Activated CD4-positive, alpha-beta T cell treated with anti-CD3 and anti-CD28 coated beads, Interleukin-2, amount 10 ng/mL, durations not matched to agents 24 days and 14 days (primary cell): ENCODE measurements at regions of chr7 and their contacts with region 1.

Region 1: DNA sequence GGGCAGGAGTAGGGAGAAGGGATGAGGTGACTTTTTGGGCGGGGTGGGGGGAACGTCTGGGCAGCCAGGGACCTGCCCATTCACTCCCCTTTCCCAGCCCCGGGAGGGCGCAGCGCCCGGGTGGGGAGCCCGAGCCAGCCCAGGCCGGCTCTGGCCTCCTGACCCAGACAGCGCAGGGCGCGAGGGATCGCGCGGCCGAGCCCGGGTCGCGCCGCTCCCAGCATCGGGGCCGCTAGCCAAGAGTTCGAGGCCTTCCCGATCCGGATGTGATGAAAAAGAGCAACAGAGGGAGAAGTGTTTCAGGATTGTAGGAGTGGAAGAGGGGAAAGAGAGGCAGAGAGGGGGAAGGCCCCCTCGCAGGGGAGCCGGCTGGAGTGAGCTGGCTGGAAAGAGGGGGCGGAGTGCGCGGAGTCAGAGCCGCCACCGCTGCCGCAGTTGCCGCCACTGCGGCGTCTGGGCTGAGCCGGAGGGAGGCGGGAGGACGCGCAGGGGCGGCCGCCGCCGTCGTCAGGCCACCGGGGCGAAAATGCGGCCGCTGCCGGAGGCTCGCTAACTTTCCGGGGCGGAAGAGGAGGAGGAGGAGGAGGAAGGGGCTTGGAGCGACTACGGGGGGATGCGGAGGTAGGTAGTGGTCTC is at the start of gene MDFIC:
- DNase-seq: peak; percentile 89
- H3K4me3 Mint-ChIP-seq: peak within 1 kb of the TSS; percentile 96
- H3K27ac Mint-ChIP-seq: peak within 1 kb of the TSS; percentile 98
- H3K4me1 Mint-ChIP-seq: peaks cover 56% of the 10 kb centered on the region
- H3K27me3 Mint-ChIP-seq: no peaks in the 10 kb centered on the region
- total RNA-seq, gene MDFIC: 172 and 175 TPM in 2 replicates

Region 2: DNA sequence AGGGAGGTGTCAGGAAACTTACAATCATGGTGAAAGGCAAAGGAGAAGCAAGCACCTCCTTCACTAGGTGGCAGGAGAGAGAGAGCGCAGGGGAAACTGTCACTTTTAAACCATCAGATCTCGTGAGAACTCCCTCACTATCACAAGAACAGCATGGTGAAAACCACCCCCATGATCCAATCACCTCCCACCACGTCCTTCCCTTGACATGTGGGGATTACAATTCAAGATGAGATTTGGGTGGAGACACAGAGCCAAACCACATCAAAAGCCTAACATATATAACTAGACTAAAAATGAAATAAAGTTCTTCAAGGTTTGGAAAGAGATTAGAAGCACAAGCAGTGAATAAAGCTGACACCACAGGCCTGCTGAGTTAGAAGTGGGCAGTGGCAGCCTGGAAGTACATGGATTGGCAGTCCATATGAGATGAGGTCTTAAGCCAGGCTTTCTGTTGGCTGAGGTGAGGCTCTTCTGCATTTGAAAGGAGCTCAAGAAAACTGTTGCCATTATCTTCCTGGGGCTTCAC is 96.6 kb before region 1 on chr7:
- intact Hi-C with region 1: loop called (anchors 1 kb)
- DNase-seq: peak; percentile 72
- H3K4me3 Mint-ChIP-seq: peak overlapping the region; percentile 54
- H3K27ac Mint-ChIP-seq: peak overlapping the region; percentile 97
- H3K4me1 Mint-ChIP-seq: peaks cover 24% of the 10 kb centered on the region
- H3K27me3 Mint-ChIP-seq: no peaks in the 10 kb centered on the region

Region 3: DNA sequence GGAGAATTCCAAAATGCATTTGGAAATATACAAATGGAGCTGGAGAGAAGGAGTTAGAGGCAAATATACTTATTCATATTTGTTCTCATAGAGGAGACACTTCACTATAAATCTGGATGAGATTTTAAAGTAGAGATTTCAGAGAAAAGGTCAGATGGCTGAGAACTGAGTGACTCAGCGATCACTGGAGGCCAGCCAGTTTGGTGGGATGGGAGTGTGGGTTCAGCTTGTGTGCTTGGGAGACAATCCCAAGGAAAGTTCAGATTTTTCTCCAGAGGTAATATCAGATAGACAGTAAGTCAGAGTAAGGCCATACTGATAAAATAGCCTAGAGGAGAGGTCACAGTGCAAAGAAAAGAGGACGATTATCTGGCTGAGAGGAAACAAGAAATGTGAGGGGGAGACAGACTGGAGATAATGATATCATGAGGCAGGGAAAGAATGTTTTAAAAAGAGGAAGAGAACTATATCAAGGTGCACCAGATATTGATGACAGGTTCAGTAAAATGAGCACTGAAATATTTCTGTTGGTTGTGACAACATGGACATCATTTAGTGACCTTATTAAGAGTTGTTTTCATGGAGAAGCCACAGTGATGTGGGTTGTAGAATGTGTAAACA is 66.7 kb after region 1 on chr7:
- intact Hi-C with region 1: no loop called
- DNase-seq: no peak
- H3K4me3 Mint-ChIP-seq: no peak overlapping the region
- H3K27ac Mint-ChIP-seq: no peak overlapping the region
- H3K4me1 Mint-ChIP-seq: peaks cover 27% of the 10 kb centered on the region
- H3K27me3 Mint-ChIP-seq: no peaks in the 10 kb centered on the region

Region 4: GRCh38 chr7:115008465-115009114 is 86.5 kb after region 1 on chr7:
- intact Hi-C with region 1: loop called (anchors 2 kb)
- DNase-seq: peak; percentile 72
- H3K4me3 Mint-ChIP-seq: peak overlapping the region; percentile 73
- H3K27ac Mint-ChIP-seq: peak overlapping the region; percentile 86
- H3K4me1 Mint-ChIP-seq: peaks cover 73% of the 10 kb centered on the region
- H3K27me3 Mint-ChIP-seq: no peaks in the 10 kb centered on the region